Aorta (tissue), 5 donors: ENCODE measurements at regions of chr13 and their contacts with region 1.

Region 1: DNA sequence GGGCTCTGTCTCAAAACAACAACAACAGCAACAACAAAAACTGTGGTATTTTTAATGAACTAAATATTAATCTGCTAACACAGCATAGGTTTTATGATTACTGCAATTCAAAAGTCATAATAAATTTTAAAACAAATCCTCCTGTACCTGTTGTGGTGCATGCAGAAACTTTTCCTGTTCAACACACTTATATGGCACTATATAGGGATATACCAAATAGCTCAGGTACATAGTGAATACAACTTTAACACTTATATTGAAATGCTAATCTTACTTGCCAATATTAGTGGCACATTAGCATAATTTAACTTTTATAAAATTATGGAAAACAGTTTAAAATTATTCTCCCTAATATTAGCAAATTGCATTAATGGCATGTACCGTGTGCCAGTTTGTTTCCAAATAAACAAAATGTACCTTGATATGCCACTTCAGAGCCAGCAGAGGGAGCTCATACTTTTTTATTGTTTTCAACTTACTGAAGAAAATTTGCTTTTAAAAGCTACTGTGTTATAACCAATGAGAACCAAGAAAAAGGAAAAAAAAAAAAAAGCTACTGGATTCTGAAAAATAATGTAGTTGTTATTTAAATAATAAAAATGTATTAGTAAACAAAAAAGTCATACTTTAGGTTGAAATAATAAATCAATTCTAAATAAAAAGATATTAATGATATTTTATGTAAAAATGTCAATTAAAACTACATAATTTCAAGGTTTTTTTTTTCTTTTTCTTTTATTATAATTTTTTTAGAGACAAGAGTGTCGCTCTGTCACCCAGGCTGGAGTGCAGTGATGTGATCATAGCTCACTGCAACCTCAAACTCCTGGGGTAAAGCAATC is 18.0 kb upstream of the RBM26 start:
- DNase-seq: no peak
- ATAC-seq: no peak
- H3K4me3 ChIP-seq: no peak overlapping the region
- H3K27ac ChIP-seq: no peak overlapping the region
- H3K4me1 ChIP-seq: no peaks in the 10 kb centered on the region
- H3K27me3 ChIP-seq: no peaks in the 10 kb centered on the region

Region 2: DNA sequence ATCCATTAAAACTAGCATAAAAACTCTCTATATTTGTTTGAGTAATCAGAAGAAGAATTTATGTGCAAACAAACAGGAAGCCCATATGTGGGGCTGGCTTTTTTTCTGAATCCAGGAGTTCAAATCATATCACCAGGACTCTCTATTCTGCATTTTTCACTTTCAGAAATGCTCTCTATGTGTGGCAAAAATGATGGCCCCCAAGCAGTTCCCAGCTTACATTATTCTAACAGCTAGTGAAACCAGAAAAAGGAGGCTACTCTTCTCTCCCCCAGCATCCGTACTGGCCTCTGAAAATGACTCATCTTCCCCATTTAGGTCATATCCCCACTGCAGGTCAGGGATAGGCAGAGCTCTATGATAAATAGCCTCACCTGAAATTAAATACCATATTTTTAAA is 38.3 kb before region 1 on chr13:
- intact Hi-C with region 1: no loop called
- DNase-seq: no peak
- ATAC-seq: no peak
- H3K4me3 ChIP-seq: no peak overlapping the region
- H3K27ac ChIP-seq: no peak overlapping the region
- H3K4me1 ChIP-seq: no peaks in the 10 kb centered on the region
- H3K27me3 ChIP-seq: no peaks in the 10 kb centered on the region

Region 3: GRCh38 chr13:79541426-79542049 is 117.5 kb after region 1 on chr13:
- intact Hi-C with region 1: loop called (anchors 2 kb)
- DNase-seq: no peak
- ATAC-seq: no peak
- H3K4me3 ChIP-seq: no peak overlapping the region
- H3K27ac ChIP-seq: no peak overlapping the region
- H3K4me1 ChIP-seq: no peaks in the 10 kb centered on the region
- H3K27me3 ChIP-seq: no peaks in the 10 kb centered on the region